ENCODE measurements at regions of chr4 and their contacts with region 1.

Region 1: DNA sequence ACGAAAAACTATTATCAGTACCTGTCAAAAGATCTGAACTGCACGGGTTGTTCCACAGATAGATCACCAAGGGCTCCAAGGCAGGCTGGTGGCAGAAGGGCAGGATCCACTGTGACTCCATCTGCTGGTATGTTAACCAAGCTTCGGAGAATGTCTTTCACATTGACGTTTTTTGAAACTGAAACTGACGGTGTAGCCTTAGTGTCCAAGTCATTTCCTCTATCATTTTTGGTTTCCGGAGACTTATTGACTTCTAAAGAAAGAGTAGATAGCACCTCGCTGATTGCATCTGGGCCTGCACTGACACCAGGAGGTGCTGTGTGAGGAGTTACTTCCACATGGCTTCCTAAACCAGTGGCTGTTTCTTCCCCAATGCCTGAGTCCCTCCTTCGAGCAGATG is 186.9 kb downstream of the LRBA start:
- DNase-seq: peak; percentile 77
- ATAC-seq: peak; percentile 98
- H3K4me3 ChIP-seq: no peak overlapping the region
- H3K27ac ChIP-seq: peak overlapping the region; percentile 42
- H3K4me1 ChIP-seq: peaks cover 6% of the 10 kb centered on the region
- H3K27me3 ChIP-seq: no peaks in the 10 kb centered on the region
- CTCF ChIP-seq: peak; percentile 26 to 61 (median 41); a peak in 5 of 6 replicates
- EP300 ChIP-seq: no peak
- POLR2A ChIP-seq: no peak
- RAD21 ChIP-seq: peak; percentile 29; the same call in 1 of the 2 replicates

Region 2: DNA sequence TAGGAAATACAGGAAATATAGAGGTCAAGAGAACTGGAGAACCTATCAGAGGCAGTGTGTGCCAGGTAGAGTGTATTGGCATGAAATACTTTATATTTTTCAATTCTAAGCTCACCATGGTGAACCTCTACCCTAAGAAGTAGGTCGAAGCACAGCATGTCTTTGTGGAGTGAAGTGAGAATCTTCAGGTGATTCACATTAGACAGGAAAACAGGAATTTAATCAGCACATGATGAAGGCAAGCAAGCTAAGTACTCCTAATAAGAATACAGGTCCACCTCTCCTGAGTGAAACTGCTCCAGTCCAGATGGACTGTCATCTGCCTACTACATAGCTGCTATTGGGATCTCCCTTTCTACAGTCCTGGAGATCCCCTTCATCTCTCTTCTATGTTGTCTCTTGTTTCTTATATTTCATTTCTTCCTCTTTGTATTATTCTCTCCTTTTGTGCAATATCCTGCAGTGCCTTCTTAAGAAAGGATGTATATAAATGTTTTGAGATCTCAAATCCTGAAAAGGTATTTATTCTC is 27.9 kb after region 1 on chr4:
- CTCF ChIA-PET with region 1: interaction called, 10 read pairs
- POLR2A ChIA-PET with region 1: no interaction called
- RAD21 ChIA-PET with region 1: interaction called, 4 read pairs
- SMC1A ChIA-PET with region 1: interaction called, 5 read pairs
- in situ Hi-C with region 1: no loop called
- intact Hi-C with region 1: no loop called
- DNase-seq: no peak
- ATAC-seq: peak; percentile 89
- H3K4me3 ChIP-seq: no peak overlapping the region
- H3K27ac ChIP-seq: no peak overlapping the region
- H3K4me1 ChIP-seq: no peaks in the 10 kb centered on the region
- H3K27me3 ChIP-seq: no peaks in the 10 kb centered on the region
- CTCF ChIP-seq: no peak
- EP300 ChIP-seq: no peak
- POLR2A ChIP-seq: no peak
- RAD21 ChIP-seq: no peak